ENCODE measurements at regions of chr13 and their contacts with region 1.

Region 1: GRCh38 chr13:30892966-30893365 is 13.1 kb upstream of the MEDAG start:
- DNase-seq: no peak
- H3K4me3 ChIP-seq: no peak overlapping the region
- CTCF ChIP-seq: peak; percentile 67

Region 2: GRCh38 chr13:30880856-30881155 is 12.2 kb before region 1 on chr13:
- CTCF ChIA-PET with region 1: interaction called, 17 read pairs
- POLR2A ChIA-PET with region 1: no interaction called
- DNase-seq: peak; percentile 82
- H3K4me3 ChIP-seq: no peak overlapping the region
- CTCF ChIP-seq: no peak

Region 3: GRCh38 chr13:30920162-30920909 is 27.4 kb after region 1 on chr13:
- CTCF ChIA-PET with region 1: no interaction called
- POLR2A ChIA-PET with region 1: no interaction called
- DNase-seq: no peak
- H3K4me3 ChIP-seq: no peak overlapping the region
- CTCF ChIP-seq: no peak

Region 4: DNA sequence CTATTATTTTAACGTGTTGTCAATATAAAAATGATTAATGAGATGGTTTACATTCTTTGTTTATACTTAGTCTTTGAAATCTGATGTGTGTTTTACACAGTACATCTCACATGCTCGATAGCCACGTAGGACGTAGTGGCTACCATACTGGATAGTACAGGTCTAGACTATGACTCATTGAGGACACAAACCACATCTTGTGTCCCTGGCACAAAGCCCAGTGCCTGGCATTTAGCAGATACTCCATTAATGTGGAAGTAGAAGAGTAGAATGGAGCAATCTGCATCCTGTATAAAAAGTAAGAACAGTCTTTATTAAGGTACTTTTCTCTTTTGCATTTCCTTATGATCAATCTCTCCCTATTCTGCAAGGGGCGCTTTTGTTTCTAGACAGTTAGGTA is 1089.6 kb after region 1 on chr13:
- CTCF ChIA-PET with region 1: no interaction called
- POLR2A ChIA-PET with region 1: no interaction called
- DNase-seq: peak; percentile 19
- H3K4me3 ChIP-seq: no peak overlapping the region
- CTCF ChIP-seq: no peak

Measured in AG04449 (cell line).